ENCODE measurements at regions of chr15 and their contacts with region 1.

Region 1: DNA sequence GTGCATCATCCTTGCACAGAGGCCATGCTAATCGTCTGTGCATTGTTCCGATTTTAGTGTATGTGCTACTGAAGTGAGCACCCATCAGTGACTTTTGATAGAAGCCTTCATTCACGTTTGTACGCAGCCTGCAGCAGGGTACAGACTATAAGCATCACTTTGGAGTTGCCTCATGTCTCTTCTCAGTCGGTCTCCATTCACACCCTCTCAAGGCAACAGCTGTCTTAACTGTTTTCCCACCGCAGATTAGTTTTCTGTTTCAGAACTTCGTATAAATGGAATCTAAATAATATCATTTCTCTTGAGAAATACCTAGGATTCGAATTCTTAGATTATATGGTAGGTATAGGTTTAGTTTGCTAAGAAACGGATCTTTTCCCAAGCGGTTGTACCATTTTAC is 143.2 kb downstream of the KLHL25 start:
- DNase-seq: no peak
- ATAC-seq: no peak
- H3K4me3 ChIP-seq: no peak overlapping the region
- H3K27ac ChIP-seq: no peak overlapping the region
- H3K4me1 ChIP-seq: no peaks in the 10 kb centered on the region
- H3K27me3 ChIP-seq: no peaks in the 10 kb centered on the region
- CTCF ChIP-seq: no peak
- POLR2A ChIP-seq: no peak
- RAD21 ChIP-seq: no peak

Region 2: GRCh38 chr15:85667491-85668424 is 16.2 kb after region 1 on chr15:
- CTCF ChIA-PET with region 1: no interaction called
- POLR2A ChIA-PET with region 1: no interaction called
- RAD21 ChIA-PET with region 1: no interaction called
- intact Hi-C with region 1: loop called (anchors 2 kb)
- DNase-seq: peak; percentile 48
- ATAC-seq: no peak
- H3K4me3 ChIP-seq: no peak overlapping the region
- H3K27ac ChIP-seq: no peak overlapping the region
- H3K4me1 ChIP-seq: peaks cover 0 to 4% of the 10 kb centered on the region in 2 experiments; a peak in 1 of 4 replicates
- H3K27me3 ChIP-seq: no peaks in the 10 kb centered on the region
- CTCF ChIP-seq: no peak
- POLR2A ChIP-seq: no peak
- RAD21 ChIP-seq: no peak

Measured in HCT116 (cell line).